Activated CD4-positive, alpha-beta memory T cell treated with anti-CD3 and anti-CD28 coated beads for 36 hours (primary cell): ENCODE measurements at regions of chr5 and their contacts with region 1.

Region 1: GRCh38 chr5:54844905-54845566 is 140.4 kb downstream of the ESM1 start:
- DNase-seq: no peak
- H3K4me3 Mint-ChIP-seq: no peak overlapping the region
- H3K27ac Mint-ChIP-seq: no peak overlapping the region
- H3K4me1 Mint-ChIP-seq: peaks cover under 1% of the 10 kb centered on the region
- H3K27me3 Mint-ChIP-seq: peaks cover 5% of the 10 kb centered on the region

Region 2: GRCh38 chr5:54229041-54229780 is 615.8 kb before region 1 on chr5:
- CTCF ChIA-PET with region 1: no interaction called
- POLR2A ChIA-PET with region 1: no interaction called
- intact Hi-C with region 1: no loop called
- DNase-seq: peak; percentile 80
- H3K4me3 Mint-ChIP-seq: no peak overlapping the region
- H3K27ac Mint-ChIP-seq: no peak overlapping the region
- H3K4me1 Mint-ChIP-seq: peaks cover 2% of the 10 kb centered on the region
- H3K27me3 Mint-ChIP-seq: no peaks in the 10 kb centered on the region

Region 3: DNA sequence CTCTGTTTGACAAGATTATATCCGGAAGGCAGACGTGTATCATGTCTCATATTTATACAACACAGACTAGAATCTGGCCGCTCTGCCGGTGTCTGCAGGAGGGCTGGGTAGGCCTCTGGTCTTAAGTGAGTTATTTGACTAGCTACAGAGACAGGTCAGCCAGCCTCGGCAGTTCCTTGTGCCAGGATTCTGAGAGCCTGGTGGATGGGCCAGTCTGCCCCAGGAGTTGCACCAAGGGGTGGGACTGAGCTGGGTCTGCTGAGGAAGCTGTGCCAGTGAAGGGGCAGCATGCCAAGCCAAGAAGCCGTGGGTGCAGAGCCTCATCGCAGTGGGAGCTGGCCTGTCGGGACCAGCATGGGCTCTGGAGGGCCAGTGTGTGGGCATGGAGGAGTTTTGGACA is 320.3 kb before region 1 on chr5:
- CTCF ChIA-PET with region 1: interaction called, 195 read pairs
- POLR2A ChIA-PET with region 1: no interaction called
- intact Hi-C with region 1: no loop called
- DNase-seq: no peak
- H3K4me3 Mint-ChIP-seq: no peak overlapping the region
- H3K27ac Mint-ChIP-seq: no peak overlapping the region
- H3K4me1 Mint-ChIP-seq: peaks cover 60% of the 10 kb centered on the region
- H3K27me3 Mint-ChIP-seq: no peaks in the 10 kb centered on the region

Region 4: DNA sequence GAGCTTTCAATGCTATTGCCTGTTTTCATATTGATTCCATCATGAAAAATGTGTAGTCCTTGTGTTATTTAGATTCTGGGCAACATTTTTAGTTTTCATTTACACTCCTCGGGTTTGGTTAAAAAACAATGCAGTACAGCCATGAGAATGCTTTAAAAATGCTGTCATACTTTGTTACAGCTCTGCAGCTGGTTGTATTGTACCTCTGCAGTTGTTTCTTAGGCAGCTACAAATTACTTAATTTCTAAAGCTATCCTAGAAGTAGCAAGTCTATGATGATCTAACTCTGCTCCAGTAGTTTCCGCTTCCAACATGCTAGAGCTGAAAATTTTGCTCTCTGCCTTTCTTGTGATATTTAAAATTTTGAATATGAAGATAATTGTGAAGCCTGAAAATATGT is 307.3 kb before region 1 on chr5:
- CTCF ChIA-PET with region 1: interaction called, 13 read pairs
- POLR2A ChIA-PET with region 1: no interaction called
- intact Hi-C with region 1: no loop called
- DNase-seq: no peak
- H3K4me3 Mint-ChIP-seq: no peak overlapping the region
- H3K27ac Mint-ChIP-seq: no peak overlapping the region
- H3K4me1 Mint-ChIP-seq: peaks cover 30% of the 10 kb centered on the region
- H3K27me3 Mint-ChIP-seq: no peaks in the 10 kb centered on the region

Region 5: GRCh38 chr5:54646356-54647101 is 198.5 kb before region 1 on chr5:
- CTCF ChIA-PET with region 1: interaction called, 4 read pairs
- POLR2A ChIA-PET with region 1: no interaction called
- intact Hi-C with region 1: loop called (anchors 10 kb)
- DNase-seq: peak; percentile 85
- H3K4me3 Mint-ChIP-seq: peak overlapping the region; percentile 33
- H3K27ac Mint-ChIP-seq: peak overlapping the region; percentile 80
- H3K4me1 Mint-ChIP-seq: peaks cover 50% of the 10 kb centered on the region
- H3K27me3 Mint-ChIP-seq: no peaks in the 10 kb centered on the region

Region 6: GRCh38 chr5:54778783-54779182 is 66.3 kb before region 1 on chr5:
- CTCF ChIA-PET with region 1: no interaction called
- POLR2A ChIA-PET with region 1: no interaction called
- intact Hi-C with region 1: no loop called
- DNase-seq: no peak
- H3K4me3 Mint-ChIP-seq: no peak overlapping the region
- H3K27ac Mint-ChIP-seq: no peak overlapping the region
- H3K4me1 Mint-ChIP-seq: no peaks in the 10 kb centered on the region
- H3K27me3 Mint-ChIP-seq: peaks cover 5% of the 10 kb centered on the region

Region 7: GRCh38 chr5:54895816-54896341 is 50.8 kb after region 1 on chr5:
- CTCF ChIA-PET with region 1: interaction called, 12 read pairs
- POLR2A ChIA-PET with region 1: no interaction called
- intact Hi-C with region 1: no loop called
- DNase-seq: no peak
- H3K4me3 Mint-ChIP-seq: no peak overlapping the region
- H3K27ac Mint-ChIP-seq: no peak overlapping the region
- H3K4me1 Mint-ChIP-seq: peaks cover 5% of the 10 kb centered on the region
- H3K27me3 Mint-ChIP-seq: peaks cover 54% of the 10 kb centered on the region

Region 8: GRCh38 chr5:55159763-55160492 is 314.9 kb after region 1 on chr5 and contains the start of gene GPX8:
- CTCF ChIA-PET with region 1: interaction called, 13 read pairs
- POLR2A ChIA-PET with region 1: no interaction called
- intact Hi-C with region 1: no loop called
- DNase-seq: no peak
- H3K4me3 Mint-ChIP-seq: no peak within 1 kb of the TSS
- H3K27ac Mint-ChIP-seq: no peak within 1 kb of the TSS
- H3K4me1 Mint-ChIP-seq: no peaks in the 10 kb centered on the region
- H3K27me3 Mint-ChIP-seq: peaks cover 16% of the 10 kb centered on the region
- total RNA-seq, gene GPX8: not detected